Activated CD8-positive, alpha-beta T cell treated with anti-CD3 and anti-CD28 coated beads for 36 hours (primary cell): ENCODE measurements at regions of chr2 and their contacts with region 1.

Region 1: GRCh38 chr2:171160119-171160955 is at the start of gene TLK1:
- DNase-seq: peak; percentile 82
- ATAC-seq: peak; percentile 69
- H3K4me3 Mint-ChIP-seq: peak within 1 kb of the TSS; percentile 91
- H3K27ac Mint-ChIP-seq: peak within 1 kb of the TSS; percentile 96
- H3K4me1 Mint-ChIP-seq: peaks cover 48% of the 10 kb centered on the region
- H3K27me3 Mint-ChIP-seq: no peaks in the 10 kb centered on the region
- CTCF ChIP-seq: no peak
- total RNA-seq, gene TLK1: 53.9 to 56.0 TPM

Region 2: DNA sequence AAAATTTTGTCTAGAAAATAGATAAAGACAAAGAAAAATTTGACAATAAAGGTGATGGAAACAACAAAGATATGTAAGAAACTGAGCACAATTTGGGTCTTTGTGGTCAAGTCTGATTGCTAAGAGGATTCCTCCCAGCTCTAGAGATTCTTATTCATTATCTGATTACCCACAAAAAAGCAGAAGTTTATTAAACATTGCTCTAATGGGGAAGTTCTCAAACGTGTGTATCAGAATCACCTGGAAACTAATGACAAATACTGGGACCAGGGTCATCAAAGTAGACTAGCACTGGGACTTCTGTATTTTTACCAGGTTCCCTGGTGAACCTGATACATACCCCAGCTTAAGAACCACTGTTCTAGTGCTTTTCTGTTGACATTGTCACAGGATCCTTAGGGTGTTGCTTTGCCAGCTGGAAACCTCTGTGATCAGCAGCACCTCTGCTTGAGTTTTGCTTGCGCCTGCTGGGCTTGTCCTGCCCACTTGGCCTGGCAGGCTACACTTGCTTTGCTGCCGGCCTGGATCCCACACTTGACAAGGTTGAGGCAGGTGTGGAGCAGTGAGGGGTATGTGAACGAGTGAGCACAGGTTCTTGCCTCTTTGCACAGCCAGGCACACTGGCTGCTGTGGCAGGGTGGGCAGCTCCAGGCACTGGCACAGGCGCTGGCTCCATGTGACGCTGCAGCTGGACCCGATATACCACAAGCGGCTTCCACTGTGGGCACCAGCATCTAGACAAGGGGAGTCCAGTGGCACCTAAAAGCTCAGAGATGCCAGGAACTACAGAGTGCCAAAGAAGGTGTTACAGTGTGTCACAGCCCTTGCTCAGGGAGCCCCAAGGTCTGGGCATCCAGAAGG is 237.5 kb before region 1 on chr2:
- CTCF ChIA-PET with region 1: no interaction called
- POLR2A ChIA-PET with region 1: no interaction called
- intact Hi-C with region 1: no loop called
- DNase-seq: no peak
- ATAC-seq: no peak
- H3K4me3 Mint-ChIP-seq: no peak overlapping the region
- H3K27ac Mint-ChIP-seq: no peak overlapping the region
- H3K4me1 Mint-ChIP-seq: peaks cover 9% of the 10 kb centered on the region
- H3K27me3 Mint-ChIP-seq: no peaks in the 10 kb centered on the region
- CTCF ChIP-seq: no peak

Region 3: DNA sequence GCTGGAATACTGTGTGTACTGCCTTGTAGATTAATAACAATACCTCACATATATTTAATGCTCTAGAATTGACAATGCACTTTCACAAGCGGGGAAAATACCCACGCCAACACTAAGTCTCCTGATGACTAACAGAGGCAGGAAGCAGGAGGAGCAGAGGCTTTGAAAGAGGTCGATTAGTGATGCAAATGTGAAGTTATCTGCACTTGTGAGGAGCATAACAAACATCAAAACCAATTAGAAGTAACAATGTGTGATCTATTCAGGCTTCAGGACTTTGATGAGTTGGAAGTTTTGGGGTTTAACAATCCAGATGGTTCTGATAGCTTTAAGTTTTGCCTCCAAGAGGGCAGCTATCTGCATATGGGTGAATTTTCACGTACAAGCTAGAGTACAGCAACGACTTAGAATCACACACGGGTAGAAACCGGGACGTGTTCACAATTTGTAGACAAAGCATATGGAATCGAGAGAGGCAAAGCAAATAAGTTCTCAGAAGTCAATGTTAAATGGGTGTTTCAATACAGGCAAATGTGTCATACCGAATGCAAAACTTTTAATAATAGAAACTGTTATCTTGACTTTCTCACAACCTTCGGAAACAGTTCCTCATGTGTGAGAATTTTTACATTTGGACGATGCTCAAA is 158.9 kb after region 1 on chr2:
- CTCF ChIA-PET with region 1: interaction called, 5 read pairs
- POLR2A ChIA-PET with region 1: interaction called, 4 read pairs
- intact Hi-C with region 1: loop called (anchors 5 kb)
- DNase-seq: peak; percentile 78
- ATAC-seq: peak; percentile 88
- H3K4me3 Mint-ChIP-seq: peak overlapping the region; percentile 53
- H3K27ac Mint-ChIP-seq: peak overlapping the region; percentile 96
- H3K4me1 Mint-ChIP-seq: peaks cover 43% of the 10 kb centered on the region
- H3K27me3 Mint-ChIP-seq: no peaks in the 10 kb centered on the region
- CTCF ChIP-seq: no peak

Region 4: GRCh38 chr2:171433763-171434670 is 273.7 kb after region 1 on chr2 and contains the starts of genes DCAF17 and METTL8:
- CTCF ChIA-PET with region 1: no interaction called
- POLR2A ChIA-PET with region 1: interaction called, 4 read pairs
- intact Hi-C with region 1: loop called (anchors 5 kb)
- DNase-seq: peak; percentile 95
- ATAC-seq: peak; percentile 93
- H3K4me3 Mint-ChIP-seq: peak within 1 kb of the TSS; percentile 91
- H3K27ac Mint-ChIP-seq: peak within 1 kb of the TSS; percentile 95
- H3K4me1 Mint-ChIP-seq: peaks cover 46% of the 10 kb centered on the region
- H3K27me3 Mint-ChIP-seq: no peaks in the 10 kb centered on the region
- CTCF ChIP-seq: peak; percentile 48
- total RNA-seq, gene DCAF17: 19.0 to 20.1 TPM
- total RNA-seq, gene METTL8: 43.4 to 44.8 TPM